ENCODE measurements at regions of chr7 and their contacts with region 1.

Region 1: GRCh38 chr7:134547397-134548054 is 1.4 kb upstream of the AKR1B15 start:
- DNase-seq: no peak
- H3K4me3 ChIP-seq: peak overlapping the region; percentile 65
- H3K27ac ChIP-seq: peak overlapping the region; percentile 21
- H3K27me3 ChIP-seq: peaks cover 21% of the 10 kb centered on the region
- CTCF ChIP-seq: peak; percentile 93

Region 2: DNA sequence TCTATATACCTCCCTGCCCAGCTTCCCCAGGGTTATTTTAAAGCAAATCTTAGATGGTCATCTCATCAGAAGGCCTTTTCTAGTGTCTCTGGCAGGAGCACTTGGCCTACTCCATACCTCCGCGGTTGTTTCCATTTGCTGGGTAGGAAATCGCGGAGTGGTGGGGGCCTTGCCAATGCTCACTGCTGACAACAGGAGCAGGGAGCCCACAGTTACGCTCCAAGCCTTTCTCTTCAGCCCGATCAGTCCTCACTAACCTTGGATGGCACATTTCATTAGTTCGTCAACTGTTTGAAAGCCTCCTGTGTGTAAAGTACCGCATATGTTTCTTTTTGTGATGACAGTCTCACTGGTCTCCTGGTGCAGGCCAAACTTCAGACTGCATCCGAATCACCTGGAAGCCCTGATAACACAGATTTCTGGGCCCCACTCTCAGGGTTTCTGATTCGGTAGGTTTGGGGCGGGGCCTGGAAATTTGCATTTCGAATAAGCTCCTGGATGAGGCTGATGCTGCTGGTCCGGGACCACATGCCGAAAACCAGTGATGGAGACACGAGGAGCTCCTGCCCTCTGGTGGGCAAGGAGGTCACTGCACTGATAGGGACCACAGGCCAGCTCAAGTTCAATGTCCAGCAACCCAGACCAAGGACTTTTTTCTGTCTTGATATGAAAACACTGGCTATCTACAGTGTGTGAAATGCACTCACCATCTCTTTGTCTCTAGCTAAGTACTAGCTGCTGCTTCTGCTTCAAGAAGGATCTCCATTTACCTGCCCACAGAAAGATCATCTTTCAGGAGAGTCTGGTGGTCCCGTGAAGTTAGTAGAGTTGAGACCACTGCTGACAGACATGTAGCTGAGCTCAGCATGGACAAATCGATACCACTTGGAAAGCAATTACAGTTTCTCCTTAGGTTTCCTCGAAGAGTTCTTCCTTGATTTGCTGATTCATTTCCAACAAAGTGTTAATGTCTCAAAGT is 406.3 kb before region 1 on chr7:
- CTCF ChIA-PET with region 1: no interaction called
- POLR2A ChIA-PET with region 1: no interaction called
- DNase-seq: peak; percentile 27
- H3K4me3 ChIP-seq: no peak overlapping the region
- H3K27ac ChIP-seq: no peak overlapping the region
- H3K27me3 ChIP-seq: no peaks in the 10 kb centered on the region
- CTCF ChIP-seq: peak; percentile 94

Region 3: GRCh38 chr7:134533288-134533771 is 14.2 kb before region 1 on chr7:
- CTCF ChIA-PET with region 1: interaction called, 24 read pairs
- POLR2A ChIA-PET with region 1: no interaction called
- DNase-seq: no peak
- H3K4me3 ChIP-seq: no peak overlapping the region
- H3K27ac ChIP-seq: no peak overlapping the region
- H3K27me3 ChIP-seq: peaks cover 8% of the 10 kb centered on the region
- CTCF ChIP-seq: no peak

Region 4: GRCh38 chr7:134565643-134566136 is 18.2 kb after region 1 on chr7:
- CTCF ChIA-PET with region 1: interaction called, 13 read pairs
- POLR2A ChIA-PET with region 1: no interaction called
- DNase-seq: no peak
- H3K4me3 ChIP-seq: no peak overlapping the region
- H3K27ac ChIP-seq: no peak overlapping the region
- H3K27me3 ChIP-seq: peaks cover 13% of the 10 kb centered on the region
- CTCF ChIP-seq: no peak

Region 5: DNA sequence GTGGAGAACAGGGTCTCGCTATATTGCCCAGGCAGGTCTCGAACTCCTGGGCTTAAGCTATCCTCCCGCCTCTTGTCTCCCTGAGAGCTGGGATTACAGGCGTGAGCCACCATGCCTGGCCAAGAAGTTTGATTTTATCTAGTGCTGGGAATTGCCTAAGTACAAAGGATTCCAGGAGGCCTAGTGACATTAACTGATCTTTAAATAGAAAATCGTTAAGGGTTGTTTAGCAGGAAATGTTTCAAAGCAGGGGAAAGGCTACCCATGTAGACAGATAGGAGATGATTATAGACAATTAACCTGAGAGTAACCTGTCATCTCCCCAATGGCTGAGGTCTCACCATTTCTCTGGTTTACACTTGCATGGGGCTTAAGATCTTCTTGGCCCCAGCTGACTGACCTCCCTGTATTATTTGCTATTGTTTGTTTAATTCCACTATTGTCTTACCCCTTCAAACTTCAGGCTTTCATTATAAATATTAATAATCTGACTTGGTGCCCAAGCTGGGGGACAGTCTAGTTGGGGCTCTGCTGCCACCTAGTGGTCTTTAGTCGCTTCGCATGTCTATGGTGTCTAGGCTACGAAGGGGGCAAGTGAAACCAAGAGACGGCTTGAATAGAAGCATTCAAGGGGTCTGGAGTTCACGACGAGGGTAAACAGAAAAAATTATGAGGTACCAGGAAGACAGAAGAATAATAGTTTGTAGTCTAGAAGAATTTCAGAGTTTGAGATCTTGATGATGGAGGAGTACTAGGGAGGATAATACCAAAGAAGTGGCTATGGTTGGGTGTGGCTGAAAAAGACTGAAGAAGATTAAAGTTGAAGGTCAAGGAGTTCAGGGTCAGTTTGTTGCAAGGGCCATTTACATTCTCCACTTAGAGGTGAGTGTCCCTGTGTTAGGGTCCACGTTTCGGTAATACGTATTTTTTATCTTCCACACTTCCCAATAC is 58.7 kb after region 1 on chr7:
- CTCF ChIA-PET with region 1: interaction called, 17 read pairs
- POLR2A ChIA-PET with region 1: no interaction called
- DNase-seq: no peak
- H3K4me3 ChIP-seq: no peak overlapping the region
- H3K27ac ChIP-seq: no peak overlapping the region
- H3K27me3 ChIP-seq: no peaks in the 10 kb centered on the region
- CTCF ChIP-seq: peak; percentile 95

Region 6: DNA sequence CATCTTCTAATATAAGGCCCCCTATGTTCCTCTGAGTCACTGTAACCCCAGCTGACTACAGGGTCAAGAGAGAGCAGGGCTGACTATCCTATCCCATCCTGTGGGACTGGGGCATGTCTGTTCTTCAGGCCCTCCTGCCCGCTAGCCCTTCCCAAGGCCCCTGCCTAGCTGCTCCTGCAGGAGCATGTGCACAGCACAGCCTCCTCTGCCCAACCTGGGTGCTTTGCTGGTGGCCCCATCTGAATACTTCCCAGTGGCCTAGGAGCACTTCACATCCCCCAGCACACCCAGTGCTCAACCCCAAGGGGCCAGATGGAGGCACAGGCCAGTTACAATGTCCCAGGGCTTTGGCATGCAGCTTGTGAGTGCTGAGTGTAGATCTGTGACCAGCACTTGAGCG is 476.1 kb after region 1 on chr7:
- CTCF ChIA-PET with region 1: no interaction called
- POLR2A ChIA-PET with region 1: no interaction called
- DNase-seq: no peak
- H3K4me3 ChIP-seq: no peak overlapping the region
- H3K27ac ChIP-seq: no peak overlapping the region
- H3K27me3 ChIP-seq: no peaks in the 10 kb centered on the region
- CTCF ChIP-seq: no peak